Lower leg skin (tissue), 4 donors: ENCODE measurements at regions of chrX and their contacts with region 1.

Region 1: GRCh38 chrX:120477453-120477852 is 8.4 kb upstream of the LAMP2 start:
- DNase-seq: no peak
- H3K4me3 ChIP-seq: no peak overlapping the region
- CTCF ChIP-seq: no peak
- POLR2A ChIP-seq: no peak

Region 2: DNA sequence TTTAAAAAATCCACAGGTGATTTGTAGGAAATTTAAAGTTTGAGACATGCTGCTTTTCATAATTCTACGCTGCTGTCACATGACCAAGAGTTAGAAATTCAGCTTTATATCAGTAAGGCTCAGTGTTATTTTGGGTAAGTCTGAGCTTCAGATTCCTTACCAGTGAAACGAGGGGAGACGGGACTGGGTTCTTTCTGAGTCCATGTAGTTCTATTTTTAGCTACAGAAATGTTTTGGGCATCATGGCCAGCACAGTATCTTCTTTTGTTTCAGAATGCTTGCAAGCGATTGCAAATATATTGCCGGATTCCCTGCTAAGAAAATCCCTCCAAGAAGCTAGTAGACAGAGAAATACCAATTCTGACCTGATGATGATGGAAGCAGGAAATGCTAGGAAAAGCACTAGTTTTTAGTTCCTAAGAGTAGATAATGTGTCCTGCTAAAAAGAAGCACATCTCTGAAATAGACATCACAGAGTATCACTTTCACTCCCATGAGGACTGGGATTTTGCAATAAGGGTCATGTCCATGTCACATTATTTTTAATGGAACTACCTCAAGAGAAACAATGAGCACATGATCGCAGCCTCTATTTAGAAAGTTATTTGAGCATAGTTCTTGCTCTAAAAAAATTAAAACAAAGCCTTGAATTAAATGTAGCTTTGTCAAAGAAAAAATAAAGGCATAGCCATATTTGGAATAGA is 104.6 kb before region 1 on chrX:
- intact Hi-C with region 1: loop called (anchors 10 kb)
- DNase-seq: no peak
- H3K4me3 ChIP-seq: no peak overlapping the region
- CTCF ChIP-seq: no peak
- POLR2A ChIP-seq: no peak